Vagina (tissue), 2 donors: ENCODE measurements at regions of chr19 and their contacts with region 1.

Region 1: DNA sequence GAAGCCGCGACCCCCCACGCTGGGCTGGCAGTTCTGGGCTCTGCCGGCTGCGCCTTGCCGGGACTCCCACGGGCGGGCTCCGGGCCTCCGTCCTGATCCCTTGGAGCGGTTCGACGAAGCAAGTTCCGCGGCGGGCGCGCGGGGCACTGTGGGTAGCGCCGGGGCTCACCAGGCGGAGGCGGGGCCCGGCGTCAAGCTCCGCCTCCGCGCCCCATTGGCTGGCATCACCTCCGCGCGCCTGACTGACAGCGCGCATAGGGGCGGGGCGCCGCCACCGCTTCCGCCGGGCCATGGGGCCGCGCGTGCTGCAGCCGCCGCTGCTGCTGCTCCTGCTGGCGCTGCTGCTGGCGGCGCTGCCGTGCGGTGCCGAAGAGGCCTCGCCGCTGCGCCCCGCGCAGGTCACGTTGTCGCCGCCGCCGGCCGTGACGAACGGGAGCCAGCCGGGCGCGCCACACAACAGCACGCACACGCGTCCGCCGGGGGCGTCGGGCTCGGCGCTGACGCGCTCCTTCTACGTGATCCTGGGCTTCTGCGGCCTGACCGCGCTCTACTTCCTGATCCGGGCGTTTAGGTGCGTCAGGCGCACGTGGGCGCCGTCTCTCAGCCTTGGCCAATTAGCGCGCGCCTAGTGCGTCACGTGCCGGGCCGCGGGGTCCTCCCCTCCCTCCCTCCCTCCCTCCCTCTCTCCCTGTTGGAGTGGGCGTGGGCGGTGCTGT is at the start of gene FAM174C:
- DNase-seq: peak in 1 of 2 donors; percentile 95
- H3K4me3 ChIP-seq: peak within 1 kb of the TSS; percentile 76 to 87
- H3K27ac ChIP-seq: peak within 1 kb of the TSS; percentile 98
- H3K4me1 ChIP-seq: peaks cover 58% of the 10 kb centered on the region
- H3K27me3 ChIP-seq: no peaks in the 10 kb centered on the region
- CTCF ChIP-seq: no peak
- POLR2A ChIP-seq: peak in 1 of 2 donors; percentile 33
- total RNA-seq, gene FAM174C: 64.8 TPM

Region 2: GRCh38 chr19:1205114-1206062 is 70.0 kb before region 1 on chr19 and contains the start of gene STK11:
- intact Hi-C with region 1: no loop called
- DNase-seq: peak in 1 of 2 donors; percentile 97
- H3K4me3 ChIP-seq: peak within 1 kb of the TSS; percentile 72 to 74
- H3K27ac ChIP-seq: peak within 1 kb of the TSS; percentile 90
- H3K4me1 ChIP-seq: peaks cover 48% of the 10 kb centered on the region
- H3K27me3 ChIP-seq: no peaks in the 10 kb centered on the region
- CTCF ChIP-seq: no peak
- POLR2A ChIP-seq: peak in 1 of 2 donors; percentile 74
- total RNA-seq, gene STK11: 54.5 TPM

Region 3: DNA sequence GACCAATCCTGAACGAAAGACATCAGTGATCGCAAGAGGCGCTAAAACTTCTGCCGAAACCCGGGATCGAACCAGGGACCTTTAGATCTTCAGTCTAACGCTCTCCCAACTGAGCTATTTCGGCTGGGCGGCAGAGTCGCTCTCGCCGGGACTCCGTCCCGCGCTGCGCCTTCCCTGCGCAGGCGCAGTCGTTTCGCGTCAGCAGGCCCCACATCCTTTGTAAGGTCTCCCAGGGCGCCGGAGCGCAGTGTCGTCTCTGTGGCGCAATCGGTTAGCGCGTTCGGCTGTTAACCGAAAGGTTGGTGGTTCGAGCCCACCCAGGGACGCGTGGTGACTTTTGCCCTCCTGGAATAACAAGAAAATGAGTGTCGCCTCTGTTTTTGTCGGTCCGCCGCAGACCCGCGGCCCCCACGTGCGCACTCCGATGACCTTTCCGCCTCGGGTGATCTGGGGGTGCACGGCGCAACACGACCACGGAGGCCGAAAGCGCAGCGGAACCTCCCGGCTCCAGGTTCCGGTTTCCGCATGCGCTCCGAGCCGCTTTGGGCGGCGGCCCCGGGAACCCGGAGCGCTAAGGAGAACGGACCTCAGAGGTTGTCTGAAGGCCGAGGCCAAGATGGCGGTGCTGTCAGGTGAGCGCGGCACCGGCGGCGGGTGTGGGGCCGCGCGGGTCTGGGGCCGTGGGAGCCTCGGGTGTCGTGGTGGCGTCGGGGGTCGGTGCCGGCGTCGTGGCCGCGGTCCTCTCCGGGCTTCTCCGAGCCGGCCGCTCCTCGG is 108.1 kb after region 1 on chr19 and contains the start of gene NDUFS7:
- intact Hi-C with region 1: loop called (anchors 10 kb)
- DNase-seq: peak in 1 of 2 donors; percentile 95
- H3K4me3 ChIP-seq: peak within 1 kb of the TSS; percentile 70 to 84
- H3K27ac ChIP-seq: peak within 1 kb of the TSS; percentile 92
- H3K4me1 ChIP-seq: peaks cover 40% of the 10 kb centered on the region
- H3K27me3 ChIP-seq: no peaks in the 10 kb centered on the region
- CTCF ChIP-seq: peak in 1 of 3 experiments; percentile 46
- POLR2A ChIP-seq: peak in 1 of 2 donors; percentile 50
- total RNA-seq, gene NDUFS7: 141 TPM

Region 4: GRCh38 chr19:1445185-1445931 is 169.9 kb after region 1 on chr19:
- intact Hi-C with region 1: loop called (anchors 10 kb)
- DNase-seq: no peak
- H3K4me3 ChIP-seq: peak overlapping the region; percentile 28 to 32
- H3K27ac ChIP-seq: no peak overlapping the region
- H3K4me1 ChIP-seq: peaks cover 37% of the 10 kb centered on the region
- H3K27me3 ChIP-seq: peaks cover 34% of the 10 kb centered on the region
- CTCF ChIP-seq: peak; percentile 31 to 83 (median 68)
- POLR2A ChIP-seq: no peak